Heart left ventricle (tissue), 16 donors: ENCODE measurements at regions of chr3 and their contacts with region 1.

Region 1: GRCh38 chr3:36907911-36908646 is 36.8 kb downstream of the TRANK1 start:
- DNase-seq: peak; percentile 37 to 67 (median 51)
- ATAC-seq: peak; percentile 54 to 82 (median 76)
- H3K4me3 ChIP-seq: peak overlapping the region; percentile 12 to 74 (median 57)
- H3K27ac ChIP-seq: peak overlapping the region; percentile 0 to 95 (median 72)
- H3K4me1 ChIP-seq: peaks cover 0 to 62% (median 8%) of the 10 kb centered on the region in 12 donors
- H3K27me3 ChIP-seq: no peaks in the 10 kb centered on the region
- CTCF ChIP-seq: no peak
- POLR2A ChIP-seq: no peak

Region 2: GRCh38 chr3:36944012-36944640 is 36.0 kb after region 1 on chr3:
- intact Hi-C with region 1: loop called in 3 of 10 experiments (anchors 5 kb)
- DNase-seq: peak; percentile 53 to 81 (median 60)
- ATAC-seq: peak; percentile 62 to 84 (median 77)
- H3K4me3 ChIP-seq: peak overlapping the region; percentile 50 to 98 (median 84)
- H3K27ac ChIP-seq: peak overlapping the region in 11 of 12 donors; percentile 23 to 87 (median 67)
- H3K4me1 ChIP-seq: peaks cover 0 to 20% (median 10%) of the 10 kb centered on the region in 12 donors
- H3K27me3 ChIP-seq: no peaks in the 10 kb centered on the region
- CTCF ChIP-seq: peak in 2 of 12 donors; percentile 13 to 15
- POLR2A ChIP-seq: no peak